Activated naive CD4-positive, alpha-beta T cell treated with anti-CD3 and anti-CD28 coated beads for 36 hours (primary cell): ENCODE measurements at regions of chr6 and their contacts with region 1.

Region 1: DNA sequence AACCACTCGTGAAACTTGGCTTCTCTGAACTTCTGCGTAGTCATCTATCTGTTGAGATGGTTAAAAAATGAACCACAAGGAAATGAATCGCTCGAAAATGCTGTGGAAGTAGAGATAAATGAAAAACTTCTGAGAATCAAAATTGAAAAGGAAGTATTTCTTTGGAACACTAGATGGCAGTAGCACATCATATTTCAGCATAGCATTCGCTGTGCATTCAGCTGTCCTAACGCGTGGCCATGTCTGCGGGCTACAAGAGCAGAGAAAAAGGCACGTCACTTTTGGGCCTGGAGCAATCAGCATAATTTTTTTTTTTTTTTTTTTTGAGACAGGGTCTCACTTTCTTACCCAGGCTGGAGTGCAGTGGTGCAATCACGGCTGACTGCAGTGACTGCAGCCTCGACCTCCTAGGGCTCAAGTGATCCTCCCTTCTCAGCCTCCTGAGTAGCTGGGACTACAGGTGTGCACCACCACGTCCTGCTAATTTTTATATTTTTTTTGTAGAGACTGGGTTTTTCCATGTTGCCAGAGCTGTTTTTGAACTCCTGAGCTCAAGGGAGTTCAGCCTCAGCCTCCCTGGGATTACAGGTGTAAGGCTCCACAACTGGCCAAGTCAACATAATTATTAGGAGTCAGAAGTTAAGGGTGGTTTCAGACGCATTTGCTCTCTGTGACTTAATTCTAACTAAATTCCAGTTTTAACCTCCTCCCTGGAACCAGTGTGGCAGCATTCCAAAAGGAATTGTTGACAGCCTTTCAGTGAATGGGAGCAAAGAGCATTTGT is 8.8 kb upstream of the PERP start:
- DNase-seq: peak; percentile 60
- H3K4me3 Mint-ChIP-seq: no peak overlapping the region
- H3K27ac Mint-ChIP-seq: no peak overlapping the region
- H3K4me1 Mint-ChIP-seq: peaks cover 6% of the 10 kb centered on the region
- H3K27me3 Mint-ChIP-seq: peaks cover 12% of the 10 kb centered on the region

Region 2: DNA sequence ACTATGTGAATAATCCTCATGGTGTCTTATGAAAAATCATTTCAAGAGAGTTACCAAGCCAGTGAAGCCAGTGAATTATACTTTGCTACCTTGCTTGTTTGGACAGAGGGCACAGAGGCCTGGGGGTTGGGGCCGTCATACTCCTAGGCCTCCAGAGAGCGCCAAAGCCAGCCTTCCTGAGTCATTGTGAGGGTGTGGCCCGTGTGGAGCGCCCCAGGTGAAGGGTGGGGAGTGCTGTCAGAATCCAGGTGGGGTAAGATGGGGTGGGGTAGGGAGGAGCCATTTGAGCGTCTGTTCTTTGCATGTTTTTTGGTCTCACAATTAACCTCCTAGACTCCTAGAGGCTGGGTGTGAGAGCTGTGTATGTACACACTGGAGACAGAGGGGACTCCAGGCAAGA is 80.0 kb before region 1 on chr6:
- CTCF ChIA-PET with region 1: no interaction called
- intact Hi-C with region 1: no loop called
- DNase-seq: no peak
- H3K4me3 Mint-ChIP-seq: no peak overlapping the region
- H3K27ac Mint-ChIP-seq: no peak overlapping the region
- H3K4me1 Mint-ChIP-seq: no peaks in the 10 kb centered on the region
- H3K27me3 Mint-ChIP-seq: no peaks in the 10 kb centered on the region

Region 3: GRCh38 chr6:138161338-138162110 is 45.5 kb after region 1 on chr6 and contains the start of gene ARFGEF3:
- CTCF ChIA-PET with region 1: no interaction called
- intact Hi-C with region 1: loop called (anchors 2 kb)
- DNase-seq: peak; percentile 70
- H3K4me3 Mint-ChIP-seq: peak within 1 kb of the TSS; percentile 68
- H3K27ac Mint-ChIP-seq: no peak within 1 kb of the TSS
- H3K4me1 Mint-ChIP-seq: peaks cover 11% of the 10 kb centered on the region
- H3K27me3 Mint-ChIP-seq: peaks cover 59% of the 10 kb centered on the region
- total RNA-seq, gene ARFGEF3: 0.72 TPM

Region 4: DNA sequence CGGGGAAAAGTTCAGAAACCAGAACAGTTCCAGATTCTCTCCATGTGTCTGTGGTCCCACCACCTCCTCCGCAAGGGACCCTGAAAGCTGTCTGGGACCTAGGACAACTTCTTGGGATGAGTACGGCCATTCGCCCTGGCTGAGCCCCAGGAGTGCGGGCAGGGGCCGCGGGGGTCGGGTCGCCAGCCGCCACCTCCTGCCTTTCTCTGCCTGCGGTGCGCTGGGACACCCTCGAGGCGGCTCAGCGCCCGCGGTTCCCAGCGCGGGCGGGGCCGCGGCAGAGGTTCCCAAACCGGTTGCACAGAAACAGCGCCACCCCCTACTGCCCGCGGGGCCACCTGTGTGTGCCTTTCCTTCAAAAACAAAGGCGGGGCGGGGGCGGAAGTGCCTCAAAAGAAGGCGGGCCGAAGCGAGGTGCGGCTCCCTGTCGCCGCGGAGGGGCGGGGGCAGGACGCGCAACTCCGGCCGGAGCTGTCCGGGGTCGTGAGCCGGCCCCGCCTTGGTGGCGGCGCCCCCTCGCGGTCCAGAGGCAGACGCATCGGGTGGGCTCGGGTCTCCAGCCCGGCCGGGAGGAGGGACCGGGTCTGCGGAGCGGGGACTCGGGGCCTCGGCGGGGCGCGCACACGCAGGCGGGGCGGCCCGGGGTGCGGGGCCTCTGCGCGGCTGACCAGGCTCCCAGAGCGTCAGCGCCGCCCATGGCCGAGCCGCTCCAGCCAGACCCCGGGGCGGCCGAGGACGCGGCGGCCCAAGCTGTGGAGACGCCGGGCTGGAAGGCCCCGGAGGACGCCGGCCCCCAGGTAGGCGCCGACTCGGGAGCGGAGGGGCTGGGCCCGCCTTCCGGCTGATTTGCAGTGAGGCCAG is 288.0 kb after region 1 on chr6 and contains the start of gene HEBP2:
- CTCF ChIA-PET with region 1: interaction called, 10 read pairs
- intact Hi-C with region 1: no loop called
- DNase-seq: peak; percentile 98
- H3K4me3 Mint-ChIP-seq: peak within 1 kb of the TSS; percentile 81
- H3K27ac Mint-ChIP-seq: peak within 1 kb of the TSS; percentile 77
- H3K4me1 Mint-ChIP-seq: peaks cover 15% of the 10 kb centered on the region
- H3K27me3 Mint-ChIP-seq: no peaks in the 10 kb centered on the region
- total RNA-seq, gene HEBP2: 48.5 to 50.8 TPM

Region 5: GRCh38 chr6:138509371-138509770 is 393.3 kb after region 1 on chr6:
- CTCF ChIA-PET with region 1: interaction called, 42 read pairs
- intact Hi-C with region 1: loop called (anchors 1 kb)
- DNase-seq: peak; percentile 78
- H3K4me3 Mint-ChIP-seq: no peak overlapping the region
- H3K27ac Mint-ChIP-seq: no peak overlapping the region
- H3K4me1 Mint-ChIP-seq: no peaks in the 10 kb centered on the region
- H3K27me3 Mint-ChIP-seq: no peaks in the 10 kb centered on the region

Region 6: DNA sequence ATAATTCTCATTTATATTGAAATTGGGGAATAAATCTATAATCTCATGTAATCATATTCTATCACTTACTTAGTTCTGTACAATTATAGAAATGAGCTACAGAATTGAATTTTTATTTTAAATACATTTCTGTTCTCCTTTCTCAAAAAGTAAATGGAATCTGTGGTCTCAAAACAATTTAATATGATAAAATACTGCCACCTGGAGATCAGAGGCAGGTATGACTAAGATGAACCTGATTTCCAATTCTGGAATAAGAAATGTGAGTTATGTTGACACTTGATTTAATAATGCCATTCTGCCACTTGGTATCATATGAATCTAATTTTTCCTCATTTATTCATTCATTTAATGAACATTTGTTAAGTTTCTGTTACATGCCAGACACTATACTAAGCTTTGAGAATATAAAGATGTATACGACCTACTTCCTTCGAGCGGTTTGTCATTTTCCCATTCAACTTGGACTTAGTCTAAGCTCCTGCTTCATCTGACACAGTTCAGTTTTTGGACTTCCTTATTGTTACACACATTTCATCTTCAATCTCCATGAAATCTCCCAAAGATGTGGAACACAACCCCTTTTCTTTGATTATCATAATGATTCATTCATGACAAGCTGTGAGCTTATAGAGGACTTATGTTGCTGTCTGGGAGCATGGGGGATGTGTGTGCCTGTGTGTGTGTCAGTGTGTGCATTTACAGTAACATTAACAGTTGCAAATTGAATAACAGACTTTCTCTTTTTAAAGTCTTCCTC is 650.0 kb after region 1 on chr6:
- CTCF ChIA-PET with region 1: interaction called, 8 read pairs
- intact Hi-C with region 1: loop called (anchors 1 kb)
- DNase-seq: no peak
- H3K4me3 Mint-ChIP-seq: no peak overlapping the region
- H3K27ac Mint-ChIP-seq: no peak overlapping the region
- H3K4me1 Mint-ChIP-seq: peaks cover 16% of the 10 kb centered on the region
- H3K27me3 Mint-ChIP-seq: no peaks in the 10 kb centered on the region